B cell (primary cell): ENCODE measurements at regions of chr12 and their contacts with region 1.

Region 1: GRCh38 chr12:95259368-95259767 is 41.8 kb downstream of the VEZT start:
- DNase-seq: no peak
- ATAC-seq: no peak
- H3K4me3 ChIP-seq: no peak overlapping the region
- H3K4me3 Mint-ChIP-seq: no peak overlapping the region
- H3K27ac ChIP-seq: no peak overlapping the region
- H3K27ac Mint-ChIP-seq: no peak overlapping the region
- H3K4me1 ChIP-seq: no peaks in the 10 kb centered on the region
- H3K4me1 Mint-ChIP-seq: no peaks in the 10 kb centered on the region
- H3K27me3 ChIP-seq: no peaks in the 10 kb centered on the region
- H3K27me3 Mint-ChIP-seq: no peaks in the 10 kb centered on the region
- CTCF ChIP-seq: no peak

Region 2: GRCh38 chr12:95182868-95183415 is 76.4 kb before region 1 on chr12:
- CTCF ChIA-PET with region 1: no interaction called
- POLR2A ChIA-PET with region 1: no interaction called
- intact Hi-C with region 1: no loop called
- DNase-seq: no peak
- ATAC-seq: no peak
- H3K4me3 ChIP-seq: no peak overlapping the region
- H3K4me3 Mint-ChIP-seq: no peak overlapping the region
- H3K27ac ChIP-seq: no peak overlapping the region
- H3K27ac Mint-ChIP-seq: no peak overlapping the region
- H3K4me1 ChIP-seq: no peaks in the 10 kb centered on the region
- H3K4me1 Mint-ChIP-seq: peaks cover 6% of the 10 kb centered on the region
- H3K27me3 ChIP-seq: no peaks in the 10 kb centered on the region
- H3K27me3 Mint-ChIP-seq: no peaks in the 10 kb centered on the region
- CTCF ChIP-seq: no peak

Region 3: DNA sequence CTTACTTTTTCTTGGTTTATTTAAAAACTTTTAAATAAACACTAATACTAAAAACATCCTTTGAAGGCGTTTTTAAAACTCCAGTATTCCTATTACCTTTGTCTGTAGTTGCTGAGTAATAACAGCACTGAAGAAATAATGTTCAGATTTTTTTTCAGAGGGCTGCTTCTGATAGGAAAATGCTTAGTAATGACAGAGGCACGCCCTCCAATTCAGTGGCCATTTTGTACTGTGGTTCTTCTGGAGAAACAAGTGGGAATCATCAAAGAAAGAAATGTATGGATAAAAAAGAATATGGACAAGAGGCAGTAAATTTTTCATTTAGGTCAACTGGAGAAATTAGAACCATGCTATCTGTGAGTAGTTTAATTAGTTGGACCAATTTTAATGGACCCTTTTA is 28.2 kb before region 1 on chr12:
- CTCF ChIA-PET with region 1: no interaction called
- POLR2A ChIA-PET with region 1: interaction called, 10 read pairs
- intact Hi-C with region 1: no loop called
- DNase-seq: no peak
- ATAC-seq: no peak
- H3K4me3 ChIP-seq: no peak overlapping the region
- H3K4me3 Mint-ChIP-seq: no peak overlapping the region
- H3K27ac ChIP-seq: no peak overlapping the region
- H3K27ac Mint-ChIP-seq: no peak overlapping the region
- H3K4me1 ChIP-seq: peaks cover 0 to 6% of the 10 kb centered on the region in 2 donors
- H3K4me1 Mint-ChIP-seq: peaks cover 21% of the 10 kb centered on the region
- H3K27me3 ChIP-seq: no peaks in the 10 kb centered on the region
- H3K27me3 Mint-ChIP-seq: no peaks in the 10 kb centered on the region
- CTCF ChIP-seq: no peak

Region 4: DNA sequence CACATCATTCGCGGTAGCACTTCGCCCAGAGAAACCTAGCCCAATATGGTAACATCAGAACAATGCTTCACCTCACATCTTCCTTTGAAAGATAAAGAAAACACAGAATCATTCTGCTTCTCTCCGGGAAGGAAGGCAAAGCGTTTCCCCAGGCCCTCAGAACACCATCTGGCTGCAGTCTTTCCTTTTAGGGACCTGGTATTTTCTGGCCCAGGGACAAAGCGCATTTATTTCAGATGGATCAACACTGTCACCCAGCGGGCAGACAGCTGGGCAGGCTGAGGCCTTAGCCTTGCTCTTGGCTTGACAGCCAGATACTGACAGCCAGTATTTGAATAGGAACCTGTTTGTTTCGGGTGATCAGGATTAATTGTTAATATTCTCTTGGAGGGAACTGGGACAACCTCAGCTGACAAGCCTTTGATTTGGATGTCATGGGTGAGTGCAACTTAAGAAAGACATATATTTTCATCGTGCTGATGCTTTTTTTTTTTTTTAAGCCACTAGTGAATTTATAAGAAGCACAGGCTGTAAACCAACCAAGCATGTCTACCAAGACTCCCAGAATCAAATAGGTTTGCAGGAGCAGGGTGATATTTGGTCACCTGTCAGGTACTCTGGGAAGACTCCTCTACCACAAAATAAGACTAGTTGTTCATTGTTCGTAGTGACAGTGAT is 77.2 kb after region 1 on chr12:
- CTCF ChIA-PET with region 1: no interaction called
- POLR2A ChIA-PET with region 1: no interaction called
- intact Hi-C with region 1: no loop called
- DNase-seq: no peak
- ATAC-seq: no peak
- H3K4me3 ChIP-seq: no peak overlapping the region
- H3K4me3 Mint-ChIP-seq: no peak overlapping the region
- H3K27ac ChIP-seq: no peak overlapping the region
- H3K27ac Mint-ChIP-seq: no peak overlapping the region
- H3K4me1 ChIP-seq: no peaks in the 10 kb centered on the region
- H3K4me1 Mint-ChIP-seq: no peaks in the 10 kb centered on the region
- H3K27me3 ChIP-seq: peaks cover 0 to 3% (median 0%) of the 10 kb centered on the region in 4 experiments
- H3K27me3 Mint-ChIP-seq: no peaks in the 10 kb centered on the region
- CTCF ChIP-seq: no peak